A549 (cell line): ENCODE measurements at regions of chr1 and their contacts with region 1.

Region 1: GRCh38 chr1:151594143-151594625 is 17.7 kb upstream of the SNX27 start:
- DNase-seq: peak; percentile 80
- ATAC-seq: peak; percentile 67 to 75; a peak in 5 of 6 replicates
- H3K4me3 ChIP-seq: no peak overlapping the region
- H3K27ac ChIP-seq: peak overlapping the region; percentile 8 to 15; a peak in 2 of 6 replicates
- H3K4me1 ChIP-seq: peaks cover 27% of the 10 kb centered on the region
- CTCF ChIP-seq: peak; percentile 91
- EP300 ChIP-seq: no peak
- POLR2A ChIP-seq: no peak
- RAD21 ChIP-seq: peak; percentile 86 to 89

Region 2: DNA sequence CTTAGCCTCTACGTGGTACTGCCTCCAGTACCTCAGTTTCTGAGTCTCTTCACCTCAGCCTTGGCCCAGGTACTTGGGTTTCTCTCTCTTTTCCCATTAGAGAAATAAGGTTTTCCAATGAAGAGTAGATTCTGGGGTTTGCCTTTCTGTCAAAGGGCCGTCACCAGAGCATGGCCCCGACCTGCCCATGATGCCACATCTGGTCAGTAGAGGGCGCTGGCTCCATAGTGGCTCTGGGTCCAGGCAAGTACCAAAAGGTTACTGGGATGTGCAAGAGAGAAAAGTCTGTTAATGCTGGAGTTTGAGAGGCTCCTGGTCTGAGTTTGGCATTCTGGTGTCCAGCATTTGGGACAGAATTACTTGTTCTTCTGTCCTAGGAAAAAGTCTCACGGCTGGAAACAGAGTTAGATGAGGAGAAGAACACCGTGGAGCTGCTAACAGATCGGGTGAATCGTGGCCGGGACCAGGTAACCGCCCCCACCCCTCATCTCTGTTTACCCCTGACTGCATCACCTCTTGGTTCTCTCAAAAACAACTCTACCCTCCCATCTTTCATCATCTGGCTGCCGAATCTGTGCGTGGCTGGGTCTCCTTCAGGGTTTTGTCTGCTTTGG is 59.4 kb before region 1 on chr1:
- CTCF ChIA-PET with region 1: interaction called, 14 read pairs
- POLR2A ChIA-PET with region 1: no interaction called
- DNase-seq: peak; percentile 74 to 77
- ATAC-seq: peak; percentile 71 to 82
- H3K4me3 ChIP-seq: no peak overlapping the region
- H3K27ac ChIP-seq: peak overlapping the region; percentile 26 to 84; a peak in 4 of 6 replicates
- H3K4me1 ChIP-seq: peaks cover 51% of the 10 kb centered on the region
- CTCF ChIP-seq: peak; percentile 93
- EP300 ChIP-seq: no peak
- POLR2A ChIP-seq: no peak
- RAD21 ChIP-seq: peak; percentile 93 to 97

Region 3: GRCh38 chr1:151568626-151569088 is 25.5 kb before region 1 on chr1:
- CTCF ChIA-PET with region 1: interaction called, 147 read pairs
- POLR2A ChIA-PET with region 1: no interaction called
- DNase-seq: no peak
- ATAC-seq: peak; percentile 33 to 34; a peak in 3 of 6 replicates
- H3K4me3 ChIP-seq: no peak overlapping the region
- H3K27ac ChIP-seq: peak overlapping the region in 1 of 2 experiments; percentile 57; a peak in 3 of 6 replicates
- H3K4me1 ChIP-seq: peaks cover 50% of the 10 kb centered on the region
- CTCF ChIP-seq: no peak
- EP300 ChIP-seq: no peak
- POLR2A ChIP-seq: no peak
- RAD21 ChIP-seq: no peak

Region 4: DNA sequence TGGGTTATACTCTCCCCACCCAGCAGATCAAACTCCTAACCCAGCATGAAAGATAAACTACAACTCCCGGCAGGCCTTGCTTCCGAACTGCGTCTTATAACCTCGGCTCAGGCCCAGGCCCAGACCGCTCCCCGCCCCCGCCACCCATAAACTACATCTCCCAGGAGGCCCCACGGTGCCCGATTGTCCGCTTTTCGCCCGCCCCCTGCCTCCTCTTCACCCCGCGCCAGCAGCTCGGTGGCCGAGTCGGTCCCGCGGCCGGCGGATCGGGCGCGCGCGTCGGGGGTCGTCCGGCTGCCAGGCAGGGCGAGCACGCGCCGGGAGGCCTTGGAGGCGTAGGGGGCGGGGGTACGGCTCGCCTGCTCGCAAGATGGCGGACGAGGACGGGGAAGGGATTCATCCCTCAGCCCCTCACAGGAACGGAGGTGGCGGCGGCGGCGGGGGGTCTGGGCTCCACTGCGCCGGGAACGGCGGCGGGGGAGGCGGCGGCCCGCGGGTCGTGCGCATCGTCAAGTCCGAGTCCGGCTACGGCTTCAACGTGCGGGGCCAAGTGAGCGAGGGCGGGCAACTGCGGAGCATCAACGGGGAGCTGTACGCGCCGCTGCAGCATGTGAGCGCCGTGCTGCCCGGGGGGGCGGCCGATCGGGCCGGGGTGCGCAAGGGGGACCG is 17.8 kb after region 1 on chr1 and contains the start of gene SNX27:
- CTCF ChIA-PET with region 1: interaction called, 108 read pairs
- POLR2A ChIA-PET with region 1: interaction called, 4 read pairs
- DNase-seq: peak; percentile 94 to 95
- ATAC-seq: peak; percentile 90 to 93
- H3K4me3 ChIP-seq: peak within 1 kb of the TSS; percentile 88
- H3K27ac ChIP-seq: peak within 1 kb of the TSS; percentile 97 to 99
- H3K4me1 ChIP-seq: peaks cover 58% of the 10 kb centered on the region
- CTCF ChIP-seq: no peak
- EP300 ChIP-seq: no peak
- POLR2A ChIP-seq: peak; percentile 69; the same call in 1 of the 2 replicates
- RAD21 ChIP-seq: no peak
- polyA plus RNA-seq, gene SNX27: 29.1 and 30.5 TPM in 2 replicates

Region 5: DNA sequence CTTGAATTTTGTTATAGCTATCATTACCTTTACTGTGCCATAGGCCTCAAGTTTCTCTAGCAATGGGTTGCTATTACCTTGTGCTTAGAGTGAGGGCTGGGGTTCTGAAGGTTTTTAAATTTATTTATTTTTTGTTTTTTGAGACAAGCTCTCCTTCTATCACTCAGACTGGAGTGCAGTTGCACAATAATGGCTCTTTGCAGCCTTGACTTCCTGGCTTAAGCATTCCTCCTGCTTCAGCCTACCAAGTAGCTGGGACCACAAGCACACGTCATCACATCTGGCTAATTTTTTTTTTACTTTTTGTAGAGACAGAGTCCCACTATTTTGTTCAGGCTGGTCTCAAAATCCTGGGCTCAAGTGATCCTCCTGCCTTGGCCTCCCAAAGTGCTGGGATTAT is 59.2 kb after region 1 on chr1:
- CTCF ChIA-PET with region 1: interaction called, 13 read pairs
- POLR2A ChIA-PET with region 1: no interaction called
- DNase-seq: no peak
- ATAC-seq: no peak
- H3K4me3 ChIP-seq: no peak overlapping the region
- H3K27ac ChIP-seq: no peak overlapping the region
- H3K4me1 ChIP-seq: no peaks in the 10 kb centered on the region
- CTCF ChIP-seq: no peak
- EP300 ChIP-seq: no peak
- POLR2A ChIP-seq: no peak
- RAD21 ChIP-seq: no peak

Region 6: GRCh38 chr1:151693076-151693651 is 99.0 kb after region 1 on chr1:
- CTCF ChIA-PET with region 1: interaction called, 15 read pairs
- POLR2A ChIA-PET with region 1: no interaction called
- DNase-seq: peak; percentile 38 to 54
- ATAC-seq: peak; percentile 83 to 90
- H3K4me3 ChIP-seq: no peak overlapping the region
- H3K27ac ChIP-seq: no peak overlapping the region
- H3K4me1 ChIP-seq: no peaks in the 10 kb centered on the region
- CTCF ChIP-seq: peak; percentile 75
- EP300 ChIP-seq: no peak
- POLR2A ChIP-seq: no peak
- RAD21 ChIP-seq: peak; percentile 73 to 86

Region 7: GRCh38 chr1:151728151-151729054 is 134.2 kb after region 1 on chr1:
- CTCF ChIA-PET with region 1: interaction called, 23 read pairs
- POLR2A ChIA-PET with region 1: no interaction called
- DNase-seq: no peak
- ATAC-seq: peak in 1 of 2 experiments; percentile 51; a peak in 2 of 6 replicates
- H3K4me3 ChIP-seq: no peak overlapping the region
- H3K27ac ChIP-seq: no peak overlapping the region
- H3K4me1 ChIP-seq: no peaks in the 10 kb centered on the region
- CTCF ChIP-seq: no peak
- EP300 ChIP-seq: no peak
- POLR2A ChIP-seq: no peak
- RAD21 ChIP-seq: no peak

Region 8: DNA sequence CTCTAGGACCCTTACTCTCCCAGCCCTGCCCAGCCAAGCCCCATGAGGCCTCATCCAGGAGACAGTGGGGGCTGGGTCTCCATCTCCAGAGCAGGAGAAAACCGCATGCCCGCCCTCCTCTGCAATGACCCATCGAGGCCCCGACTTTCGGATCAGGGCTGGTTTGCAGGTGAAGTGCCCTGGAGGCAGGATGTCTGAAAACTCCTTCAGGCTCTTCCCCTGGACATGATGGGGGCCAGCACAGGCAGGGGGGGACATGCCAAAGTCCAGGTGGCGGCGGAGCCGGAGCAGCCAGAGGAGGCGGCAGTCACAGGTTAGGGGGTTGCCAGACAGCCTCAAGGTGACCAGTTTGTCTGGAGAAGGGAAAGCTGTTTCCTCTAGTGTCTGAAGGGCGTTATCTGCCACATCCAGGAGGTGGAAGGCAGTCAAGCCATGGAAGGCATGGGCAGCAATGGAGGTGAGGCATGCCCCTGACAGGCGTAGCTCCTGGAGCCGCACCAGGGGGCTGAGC is 207.2 kb after region 1 on chr1:
- CTCF ChIA-PET with region 1: no interaction called
- POLR2A ChIA-PET with region 1: no interaction called
- DNase-seq: no peak
- ATAC-seq: no peak
- H3K4me3 ChIP-seq: no peak overlapping the region
- H3K27ac ChIP-seq: no peak overlapping the region
- H3K4me1 ChIP-seq: no peaks in the 10 kb centered on the region
- CTCF ChIP-seq: no peak
- EP300 ChIP-seq: no peak
- POLR2A ChIP-seq: no peak
- RAD21 ChIP-seq: no peak